ENCODE measurements at regions of chr1 and their contacts with region 1.

Region 1: DNA sequence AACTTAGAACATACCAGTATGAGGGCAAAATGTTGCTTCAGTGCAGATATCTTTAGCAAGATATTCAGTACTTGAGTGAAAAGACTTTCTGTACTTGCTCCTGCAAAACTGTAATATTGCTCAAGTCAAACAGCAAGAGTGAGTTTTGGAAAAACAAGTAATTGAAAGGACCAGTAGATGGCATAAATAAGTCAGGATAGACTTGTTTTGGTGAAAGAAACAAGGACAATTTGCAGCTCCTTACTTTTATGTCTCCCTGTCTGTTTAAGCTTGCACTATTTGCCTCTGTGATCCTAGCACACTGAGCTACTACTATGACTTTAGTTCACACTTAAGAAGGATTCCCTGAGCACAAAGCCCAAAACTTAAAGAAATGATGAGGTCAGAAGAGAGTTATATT is 39.1 kb downstream of the IFI44 start:
- DNase-seq: no peak
- ATAC-seq: no peak; the same call in 2 of the 3 replicates
- H3K4me3 ChIP-seq: no peak overlapping the region
- H3K27ac ChIP-seq: no peak overlapping the region
- H3K4me1 ChIP-seq: no peaks in the 10 kb centered on the region
- H3K27me3 ChIP-seq: no peaks in the 10 kb centered on the region
- CTCF ChIP-seq: no peak; a peak in 1 of 6 replicates
- EP300 ChIP-seq: no peak
- POLR2A ChIP-seq: no peak
- RAD21 ChIP-seq: 0 out of 2 replicates have a peak, but pooled peaks have one; percentile 21

Region 2: DNA sequence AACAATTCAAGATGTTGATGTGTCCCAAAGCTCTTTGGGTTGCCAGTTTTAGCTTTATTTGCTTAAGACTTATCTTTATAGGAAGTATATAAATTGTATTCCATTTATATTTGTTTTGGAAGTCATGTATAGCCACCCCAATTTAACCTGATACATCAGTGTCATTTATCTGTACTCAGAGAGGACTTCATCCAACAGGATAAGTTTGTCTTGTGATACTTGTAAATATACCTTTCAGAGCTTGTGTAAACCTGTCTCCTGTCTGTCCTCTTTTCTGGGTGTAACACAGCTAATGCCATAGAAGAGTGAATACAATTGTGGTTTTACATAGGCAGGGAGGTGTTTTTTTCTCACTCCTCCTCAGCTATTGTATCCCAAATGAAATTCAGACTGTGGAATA is 187.5 kb before region 1 on chr1:
- CTCF ChIA-PET with region 1: no interaction called
- POLR2A ChIA-PET with region 1: no interaction called
- RAD21 ChIA-PET with region 1: no interaction called
- SMC1A ChIA-PET with region 1: no interaction called
- in situ Hi-C with region 1: no loop called
- intact Hi-C with region 1: no loop called
- DNase-seq: no peak
- ATAC-seq: no peak
- H3K4me3 ChIP-seq: no peak overlapping the region
- H3K27ac ChIP-seq: no peak overlapping the region
- H3K4me1 ChIP-seq: no peaks in the 10 kb centered on the region
- H3K27me3 ChIP-seq: no peaks in the 10 kb centered on the region
- CTCF ChIP-seq: no peak
- EP300 ChIP-seq: no peak
- POLR2A ChIP-seq: no peak
- RAD21 ChIP-seq: no peak

Region 3: DNA sequence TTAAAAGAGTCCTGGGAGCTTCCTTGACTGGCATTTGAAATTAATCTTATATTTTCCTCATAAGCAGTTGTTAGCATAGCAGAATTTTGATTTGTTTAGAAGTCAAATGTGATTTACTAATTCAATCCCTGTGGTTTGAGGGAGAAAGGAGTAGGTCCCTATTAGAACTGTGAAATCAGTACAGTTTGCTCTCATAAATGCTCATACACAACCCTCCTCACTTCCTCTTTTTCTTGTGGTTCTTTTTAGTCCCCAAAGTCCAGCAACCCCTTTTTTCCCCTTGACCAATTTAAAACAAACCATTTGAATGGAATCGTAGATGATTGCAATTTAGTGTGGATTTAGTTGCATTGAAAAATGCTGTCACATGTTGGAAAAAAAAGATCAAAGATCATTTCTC is 48.2 kb before region 1 on chr1:
- CTCF ChIA-PET with region 1: no interaction called
- POLR2A ChIA-PET with region 1: no interaction called
- RAD21 ChIA-PET with region 1: no interaction called
- SMC1A ChIA-PET with region 1: no interaction called
- in situ Hi-C with region 1: no loop called
- intact Hi-C with region 1: no loop called
- DNase-seq: no peak
- ATAC-seq: peak; percentile 81
- H3K4me3 ChIP-seq: no peak overlapping the region
- H3K27ac ChIP-seq: no peak overlapping the region
- H3K4me1 ChIP-seq: peaks cover 22% of the 10 kb centered on the region
- H3K27me3 ChIP-seq: no peaks in the 10 kb centered on the region
- CTCF ChIP-seq: no peak
- EP300 ChIP-seq: peak in 1 of 2 experiments; percentile 72; a peak in 1 of 4 replicates
- POLR2A ChIP-seq: no peak
- RAD21 ChIP-seq: no peak

Region 4: DNA sequence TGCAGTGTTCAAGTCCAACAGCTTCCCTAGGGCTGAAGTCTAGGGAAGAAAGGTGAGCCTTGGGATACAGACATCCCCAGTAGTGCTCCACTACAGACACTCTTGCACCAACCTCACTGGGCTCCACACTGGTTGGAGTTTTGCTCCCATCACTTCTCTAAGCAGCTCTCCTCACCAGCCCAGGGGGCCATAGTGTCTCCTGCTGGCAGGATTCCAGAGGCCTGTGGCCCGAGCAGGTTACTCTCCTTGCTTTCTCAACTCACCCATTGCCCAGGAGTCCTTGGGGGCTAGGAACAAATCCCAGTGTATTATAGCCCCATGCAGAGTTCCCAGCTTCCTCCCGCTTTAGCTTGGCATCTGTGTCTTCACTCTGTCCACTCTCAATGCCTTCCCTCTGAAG is 13.7 kb after region 1 on chr1:
- CTCF ChIA-PET with region 1: no interaction called
- POLR2A ChIA-PET with region 1: no interaction called
- RAD21 ChIA-PET with region 1: no interaction called
- SMC1A ChIA-PET with region 1: no interaction called
- in situ Hi-C with region 1: no loop called
- intact Hi-C with region 1: no loop called
- DNase-seq: no peak
- ATAC-seq: no peak
- H3K4me3 ChIP-seq: no peak overlapping the region
- H3K27ac ChIP-seq: no peak overlapping the region
- H3K4me1 ChIP-seq: no peaks in the 10 kb centered on the region
- H3K27me3 ChIP-seq: no peaks in the 10 kb centered on the region
- CTCF ChIP-seq: no peak
- EP300 ChIP-seq: no peak
- POLR2A ChIP-seq: no peak
- RAD21 ChIP-seq: no peak

Region 5: DNA sequence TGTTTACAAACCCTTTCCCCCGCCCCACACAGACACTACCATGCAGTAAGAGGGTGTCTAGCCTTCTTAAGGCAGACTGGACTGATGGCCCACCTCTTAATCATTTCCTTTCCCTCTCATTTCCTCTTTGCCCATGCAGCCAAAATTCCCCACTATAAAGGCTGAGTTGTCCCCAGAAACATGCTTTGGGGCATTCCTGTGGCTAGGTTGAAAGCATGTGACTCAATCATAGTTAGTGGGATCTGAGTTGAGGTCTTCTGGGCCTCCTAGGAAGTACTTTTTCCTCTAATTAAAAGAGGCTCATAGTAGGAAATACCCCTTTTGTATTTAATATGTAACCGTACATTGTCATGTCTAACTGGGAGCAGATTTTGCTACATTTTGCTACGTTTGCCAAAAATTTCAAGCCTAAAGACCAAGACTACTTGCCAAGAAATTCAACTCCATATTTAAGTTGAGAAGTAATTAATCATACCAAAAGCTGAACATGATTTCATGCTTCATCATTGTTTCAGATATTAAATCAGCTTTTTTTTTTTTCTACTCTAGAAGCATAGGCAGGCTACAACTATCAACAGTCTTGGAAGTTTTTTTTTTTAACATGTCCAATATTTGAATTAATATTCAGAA is 143.1 kb after region 1 on chr1:
- CTCF ChIA-PET with region 1: no interaction called
- POLR2A ChIA-PET with region 1: no interaction called
- RAD21 ChIA-PET with region 1: no interaction called
- SMC1A ChIA-PET with region 1: no interaction called
- in situ Hi-C with region 1: no loop called
- intact Hi-C with region 1: loop called (anchors 5 kb)
- DNase-seq: no peak
- ATAC-seq: peak; percentile 77
- H3K4me3 ChIP-seq: no peak overlapping the region
- H3K27ac ChIP-seq: no peak overlapping the region
- H3K4me1 ChIP-seq: no peaks in the 10 kb centered on the region
- H3K27me3 ChIP-seq: no peaks in the 10 kb centered on the region
- CTCF ChIP-seq: no peak
- EP300 ChIP-seq: no peak
- POLR2A ChIP-seq: no peak
- RAD21 ChIP-seq: no peak

Region 6: DNA sequence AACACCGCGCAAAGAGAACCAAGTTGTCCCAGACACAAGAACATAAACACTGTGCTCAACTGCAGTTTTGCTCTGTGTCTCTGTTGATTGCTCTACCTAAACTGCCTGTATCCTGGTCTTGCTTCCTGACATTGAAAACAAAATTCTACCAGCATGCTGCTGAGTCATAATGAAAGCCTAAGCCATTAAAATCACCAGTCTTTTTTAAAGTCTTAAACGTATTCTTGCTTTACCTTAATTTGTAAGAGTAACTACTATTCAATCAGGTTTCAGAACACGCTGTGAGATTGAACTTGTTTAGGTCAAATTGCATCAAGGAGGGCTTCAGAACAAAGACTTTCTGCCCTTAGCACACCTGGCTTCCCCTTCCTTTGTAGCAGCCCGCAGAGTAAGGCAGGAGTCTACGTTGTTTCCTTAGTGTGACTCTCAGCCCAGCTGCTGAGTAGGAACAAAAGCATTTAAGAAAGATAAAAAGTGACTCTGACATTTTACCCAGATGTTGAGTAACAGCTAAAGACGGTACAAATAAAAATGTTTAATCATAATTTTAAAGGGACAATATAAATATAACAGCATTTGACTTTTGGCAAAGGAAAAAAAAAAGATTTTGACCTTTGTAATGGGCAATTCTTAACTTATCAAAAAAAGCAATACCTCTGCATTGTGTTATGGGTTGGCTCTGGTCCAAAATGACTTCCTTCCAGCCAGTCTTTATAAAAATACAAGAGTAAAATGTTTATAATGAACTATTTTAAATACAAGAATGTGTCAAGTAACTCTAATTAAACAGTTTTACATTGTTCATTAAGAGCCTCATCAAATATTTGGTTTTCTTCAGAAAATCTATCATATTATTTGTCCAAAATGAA is 504.7 kb after region 1 on chr1:
- CTCF ChIA-PET with region 1: no interaction called
- POLR2A ChIA-PET with region 1: no interaction called
- RAD21 ChIA-PET with region 1: no interaction called
- SMC1A ChIA-PET with region 1: no interaction called
- in situ Hi-C with region 1: no loop called
- intact Hi-C with region 1: loop called (anchors 5 kb)
- DNase-seq: peak; percentile 41
- ATAC-seq: peak; percentile 78
- H3K4me3 ChIP-seq: no peak overlapping the region
- H3K27ac ChIP-seq: no peak overlapping the region
- H3K4me1 ChIP-seq: no peaks in the 10 kb centered on the region
- H3K27me3 ChIP-seq: no peaks in the 10 kb centered on the region
- CTCF ChIP-seq: no peak
- EP300 ChIP-seq: no peak
- POLR2A ChIP-seq: no peak
- RAD21 ChIP-seq: no peak